ENCODE measurements at regions of chr6 and their contacts with region 1.

Region 1: DNA sequence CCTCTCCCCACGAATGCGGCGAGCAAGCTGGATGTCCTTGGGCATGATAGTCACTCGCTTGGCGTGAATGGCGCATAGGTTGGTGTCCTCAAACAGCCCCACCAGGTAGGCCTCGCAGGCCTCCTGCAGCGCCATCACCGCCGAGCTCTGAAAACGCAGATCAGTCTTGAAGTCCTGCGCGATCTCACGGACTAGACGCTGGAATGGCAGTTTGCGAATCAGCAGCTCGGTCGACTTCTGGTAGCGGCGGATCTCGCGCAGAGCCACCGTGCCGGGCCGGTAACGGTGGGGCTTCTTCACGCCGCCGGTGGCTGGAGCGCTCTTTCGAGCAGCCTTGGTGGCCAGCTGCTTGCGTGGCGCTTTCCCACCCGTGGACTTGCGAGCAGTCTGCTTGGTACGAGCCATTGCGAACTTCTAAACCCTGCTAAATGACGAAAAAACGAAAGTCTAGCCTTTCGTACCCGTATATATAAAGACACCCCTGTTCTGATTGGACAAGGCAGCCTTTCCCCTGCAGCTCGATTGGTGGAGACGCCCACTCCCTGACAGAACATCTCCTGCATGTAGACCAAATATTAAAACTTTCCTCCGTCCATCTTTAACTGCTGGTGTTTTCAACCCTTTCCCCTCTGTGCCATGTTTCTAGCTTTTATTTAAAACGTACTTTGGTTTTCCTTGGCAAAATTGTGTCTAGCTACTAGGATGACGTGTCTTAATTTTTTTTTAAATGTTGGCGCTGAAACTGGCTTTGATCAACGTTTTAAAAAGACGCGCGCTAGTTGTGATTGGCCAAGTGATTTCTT is 109.8 kb downstream of the HFE start:
- DNase-seq: peak; percentile 96
- H3K4me3 ChIP-seq: peak overlapping the region; percentile 91
- H3K27ac ChIP-seq: peak overlapping the region; percentile 93
- H3K4me1 ChIP-seq: peaks cover 39% of the 10 kb centered on the region
- CTCF ChIP-seq: peak; percentile 31; the same call in 1 of the 2 replicates

Region 2: GRCh38 chr6:24919004-24919892 is 1277.8 kb before region 1 on chr6:
- CTCF ChIA-PET with region 1: no interaction called
- POLR2A ChIA-PET with region 1: no interaction called
- intact Hi-C with region 1: no loop called
- DNase-seq: peak; percentile 96
- H3K4me3 ChIP-seq: peak overlapping the region; percentile 61
- H3K27ac ChIP-seq: peak overlapping the region; percentile 88
- H3K4me1 ChIP-seq: peaks cover 66% of the 10 kb centered on the region
- CTCF ChIP-seq: no peak; the same call in 1 of the 2 replicates

Region 3: DNA sequence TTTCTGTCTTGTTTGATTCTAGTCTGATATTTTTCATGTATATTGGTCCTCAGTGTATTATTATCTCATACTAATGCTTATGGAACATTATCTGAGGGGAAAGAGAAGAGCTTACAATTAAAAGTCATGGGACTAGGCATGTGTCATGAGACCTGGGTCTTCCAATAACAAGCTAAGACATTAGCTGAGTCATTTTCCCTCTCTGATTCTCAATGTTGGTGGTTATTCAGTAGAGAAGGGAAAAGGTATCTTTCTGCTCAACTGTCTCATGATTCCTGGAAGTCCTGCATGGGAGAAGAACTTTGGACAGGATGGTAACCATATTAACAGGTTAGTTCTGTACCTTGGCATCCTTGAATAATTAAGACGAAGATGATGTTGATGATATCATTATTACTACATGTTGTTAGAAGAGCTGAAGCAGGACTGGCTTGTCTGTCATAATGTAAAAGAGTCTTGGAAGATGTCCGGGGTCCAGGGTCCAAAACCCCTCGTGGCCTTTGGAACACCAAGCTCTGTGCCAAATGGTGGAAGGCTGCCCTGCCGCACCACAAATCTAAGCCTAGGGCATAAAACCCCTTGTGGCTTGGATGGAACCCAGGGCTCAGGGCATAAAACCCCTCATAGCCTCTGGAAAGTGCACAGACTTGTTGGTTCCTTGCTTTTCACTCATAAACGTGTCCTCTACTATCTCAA is 215.3 kb before region 1 on chr6:
- CTCF ChIA-PET with region 1: no interaction called
- POLR2A ChIA-PET with region 1: no interaction called
- intact Hi-C with region 1: no loop called
- DNase-seq: no peak
- H3K4me3 ChIP-seq: no peak overlapping the region
- H3K27ac ChIP-seq: no peak overlapping the region
- H3K4me1 ChIP-seq: no peaks in the 10 kb centered on the region
- CTCF ChIP-seq: no peak

Region 4: DNA sequence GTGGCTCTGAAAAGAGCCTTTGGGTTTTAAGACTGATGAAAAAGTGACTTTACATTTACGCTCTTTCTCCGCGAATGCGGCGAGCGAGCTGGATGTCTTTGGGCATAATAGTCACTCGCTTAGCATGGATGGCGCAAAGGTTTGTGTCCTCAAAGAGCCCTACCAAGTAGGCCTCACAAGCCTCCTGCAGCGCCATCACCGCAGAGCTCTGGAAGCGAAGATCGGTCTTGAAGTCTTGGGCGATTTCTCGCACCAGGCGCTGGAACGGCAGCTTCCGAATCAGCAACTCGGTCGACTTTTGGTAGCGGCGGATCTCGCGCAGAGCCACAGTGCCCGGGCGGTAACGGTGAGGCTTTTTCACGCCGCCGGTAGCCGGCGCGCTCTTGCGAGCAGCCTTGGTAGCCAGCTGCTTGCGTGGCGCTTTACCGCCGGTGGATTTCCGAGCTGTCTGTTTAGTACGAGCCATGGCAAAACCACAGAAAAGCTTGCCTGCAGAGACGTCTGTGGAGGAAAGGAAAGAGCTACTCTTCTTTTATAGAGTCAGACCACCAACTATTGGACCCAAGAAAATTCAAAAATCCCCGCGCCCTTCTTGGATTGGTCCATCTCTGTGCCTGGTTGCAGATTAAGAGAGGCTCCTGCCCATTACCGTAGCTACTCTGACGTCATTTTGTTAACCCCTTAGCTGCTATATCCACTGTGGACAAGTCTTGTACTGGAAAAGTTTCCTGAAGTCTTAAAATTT is 165.3 kb before region 1 on chr6:
- CTCF ChIA-PET with region 1: no interaction called
- POLR2A ChIA-PET with region 1: interaction called, 246 read pairs
- intact Hi-C with region 1: no loop called
- DNase-seq: peak; percentile 99
- H3K4me3 ChIP-seq: peak overlapping the region; percentile 78
- H3K27ac ChIP-seq: peak overlapping the region; percentile 99
- H3K4me1 ChIP-seq: peaks cover 74% of the 10 kb centered on the region
- CTCF ChIP-seq: 0 out of 2 replicates have a peak, but pooled peaks have one; percentile 33

Region 5: DNA sequence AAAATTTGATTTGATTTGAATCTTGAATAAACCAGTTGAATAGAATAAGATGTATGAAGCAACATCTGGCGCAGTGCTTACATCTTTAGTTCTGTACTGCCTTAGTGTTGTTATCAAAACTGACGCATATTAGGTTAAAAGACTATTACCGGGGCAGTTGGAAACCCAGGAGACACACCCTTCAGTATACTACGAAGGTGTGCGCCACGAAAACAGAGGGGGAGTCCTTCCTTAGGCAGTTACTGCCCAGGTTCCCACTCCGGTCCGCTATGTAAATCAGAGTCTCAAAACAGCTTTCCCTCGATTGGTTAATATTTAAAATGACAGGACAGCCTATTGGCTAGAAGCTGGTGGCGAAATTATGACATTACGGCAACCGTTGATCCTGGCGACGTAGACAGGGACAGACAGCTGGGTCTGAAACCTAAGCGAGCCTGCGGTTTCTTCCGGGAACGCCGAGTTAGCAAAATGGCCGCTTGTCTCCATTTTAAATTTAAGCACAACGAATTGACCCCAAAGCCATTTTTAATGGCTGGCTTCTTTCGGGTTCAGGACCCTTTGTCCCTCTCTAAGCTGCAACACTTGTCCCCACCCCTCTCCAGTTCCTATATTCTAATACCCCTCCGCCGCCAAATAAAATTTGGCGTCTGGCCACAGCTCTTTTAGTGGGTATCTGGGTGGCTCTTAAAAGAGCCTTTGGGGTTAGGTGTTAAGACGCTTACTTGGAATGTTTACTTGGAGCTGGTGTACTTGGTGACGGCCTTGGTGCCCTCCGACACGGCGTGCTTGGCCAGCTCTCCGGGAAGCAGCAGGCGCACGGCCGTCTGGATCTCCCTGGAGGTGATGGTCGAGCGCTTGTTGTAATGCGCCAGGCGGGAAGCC is 74.0 kb before region 1 on chr6:
- CTCF ChIA-PET with region 1: no interaction called
- POLR2A ChIA-PET with region 1: interaction called, 76 read pairs
- intact Hi-C with region 1: loop called (anchors 2 kb)
- DNase-seq: peak; percentile 99
- H3K4me3 ChIP-seq: peak overlapping the region; percentile 72
- H3K27ac ChIP-seq: peak overlapping the region; percentile 99
- H3K4me1 ChIP-seq: peaks cover 60% of the 10 kb centered on the region
- CTCF ChIP-seq: no peak

Region 6: DNA sequence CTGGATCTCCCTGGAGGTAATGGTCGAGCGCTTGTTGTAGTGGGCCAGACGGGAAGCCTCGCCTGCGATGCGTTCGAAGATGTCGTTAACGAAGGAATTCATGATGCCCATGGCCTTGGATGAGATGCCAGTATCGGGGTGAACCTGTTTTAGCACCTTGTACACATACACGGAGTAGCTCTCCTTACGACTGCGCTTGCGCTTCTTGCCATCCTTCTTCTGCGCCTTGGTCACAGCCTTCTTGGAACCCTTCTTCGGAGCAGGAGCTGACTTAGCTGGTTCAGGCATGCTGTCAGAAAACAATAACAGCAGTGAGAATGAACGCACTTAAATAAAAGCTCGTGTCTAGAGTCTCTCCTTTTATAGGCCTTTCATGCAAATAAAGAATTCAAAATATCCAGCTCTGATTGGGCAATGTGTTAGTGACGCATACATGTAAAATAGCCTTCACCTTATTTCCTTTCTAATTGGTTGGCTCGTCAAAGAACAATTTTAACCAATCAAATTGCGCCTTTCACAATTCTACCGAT is 19.4 kb after region 1 on chr6:
- CTCF ChIA-PET with region 1: no interaction called
- POLR2A ChIA-PET with region 1: interaction called, 505 read pairs
- intact Hi-C with region 1: loop called (anchors 2 kb)
- DNase-seq: peak; percentile 98
- H3K4me3 ChIP-seq: peak overlapping the region; percentile 79
- H3K27ac ChIP-seq: peak overlapping the region; percentile 99
- H3K4me1 ChIP-seq: peaks cover 63% of the 10 kb centered on the region
- CTCF ChIP-seq: no peak

Region 7: DNA sequence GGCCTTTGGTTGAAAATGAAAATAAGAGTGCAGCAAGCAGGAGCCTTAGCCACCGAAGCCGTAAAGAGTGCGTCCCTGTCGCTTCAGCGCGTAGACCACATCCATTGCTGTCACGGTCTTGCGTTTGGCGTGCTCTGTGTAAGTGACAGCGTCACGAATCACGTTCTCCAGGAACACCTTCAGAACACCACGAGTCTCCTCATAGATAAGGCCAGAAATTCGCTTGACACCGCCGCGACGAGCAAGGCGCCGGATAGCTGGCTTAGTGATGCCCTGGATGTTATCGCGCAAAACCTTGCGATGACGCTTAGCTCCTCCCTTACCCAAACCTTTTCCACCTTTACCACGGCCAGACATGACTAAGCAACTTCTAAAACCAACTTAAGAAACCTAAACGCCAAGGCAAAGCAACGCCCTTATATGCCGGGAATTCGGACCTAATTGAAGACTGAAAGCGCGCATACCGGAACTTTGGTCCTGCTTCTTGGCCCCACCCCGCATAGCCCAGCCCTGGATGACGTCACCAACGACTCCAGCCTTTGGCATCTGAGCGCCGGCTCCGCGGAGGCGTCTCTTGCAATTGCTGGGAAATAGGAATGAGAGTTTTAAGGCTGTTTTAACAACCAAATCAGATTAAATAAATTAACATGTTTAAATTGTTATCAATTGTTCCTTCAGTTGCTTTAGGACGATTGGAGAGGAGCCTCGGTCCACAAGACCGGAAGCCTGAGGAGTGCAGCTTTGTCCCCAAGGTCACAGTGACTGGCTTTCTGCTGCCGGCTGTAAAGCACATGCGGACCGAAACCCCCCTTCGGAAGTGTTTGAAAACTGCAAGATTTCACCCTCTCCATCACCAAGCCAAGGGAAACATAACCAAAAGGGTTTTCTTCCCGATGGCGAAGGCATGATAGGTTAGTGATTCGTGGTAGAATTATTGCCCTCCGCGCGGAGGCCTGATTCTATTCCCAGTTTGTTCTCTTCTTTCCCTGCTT is 88.4 kb after region 1 on chr6:
- CTCF ChIA-PET with region 1: no interaction called
- POLR2A ChIA-PET with region 1: interaction called, 23 read pairs
- intact Hi-C with region 1: no loop called
- DNase-seq: peak; percentile 99
- H3K4me3 ChIP-seq: peak overlapping the region; percentile 80
- H3K27ac ChIP-seq: peak overlapping the region; percentile 96
- H3K4me1 ChIP-seq: peaks cover 32% of the 10 kb centered on the region
- CTCF ChIP-seq: 0 out of 2 replicates have a peak, but pooled peaks have one; percentile 0

Region 8: DNA sequence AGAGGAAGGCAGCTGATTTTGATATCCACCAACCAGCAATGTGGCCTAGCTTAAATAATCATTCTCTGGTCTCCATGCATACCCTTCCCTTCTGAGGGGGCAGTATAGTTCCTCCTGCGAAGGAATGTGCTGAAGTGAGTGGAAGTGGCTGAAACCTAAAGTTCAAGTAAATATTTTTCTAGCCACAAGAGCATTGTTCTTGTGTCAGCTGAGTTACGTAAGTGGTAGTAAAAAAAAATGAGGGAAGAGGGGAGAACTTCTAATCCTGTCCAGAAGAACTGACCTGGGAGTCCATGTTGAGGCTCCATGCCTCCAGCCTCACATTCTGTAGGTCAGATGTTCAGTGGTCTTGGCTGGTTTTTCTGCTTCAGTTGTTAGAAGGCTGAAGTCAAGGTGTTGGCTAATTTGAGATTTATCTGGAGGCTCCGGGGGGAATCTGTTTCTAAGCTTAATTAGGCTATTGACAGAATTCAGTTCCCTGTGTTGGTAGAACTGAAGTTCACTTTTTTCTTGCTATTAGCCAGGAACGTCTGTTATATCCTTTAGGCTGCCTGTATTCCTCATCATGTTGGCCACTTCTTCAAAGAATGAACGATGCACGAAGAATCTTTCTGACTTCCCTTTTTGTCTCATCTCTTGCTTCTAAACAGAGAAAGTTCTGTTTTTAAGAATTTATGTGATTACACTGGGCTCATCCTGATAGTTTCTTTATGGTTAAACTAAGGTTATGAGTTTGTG is 843.4 kb after region 1 on chr6:
- CTCF ChIA-PET with region 1: no interaction called
- POLR2A ChIA-PET with region 1: no interaction called
- intact Hi-C with region 1: no loop called
- DNase-seq: no peak
- H3K4me3 ChIP-seq: no peak overlapping the region
- H3K27ac ChIP-seq: no peak overlapping the region
- H3K4me1 ChIP-seq: no peaks in the 10 kb centered on the region
- CTCF ChIP-seq: no peak

Region 9: GRCh38 chr6:27864906-27865849 is 1668.1 kb after region 1 on chr6:
- CTCF ChIA-PET with region 1: no interaction called
- POLR2A ChIA-PET with region 1: interaction called, 84 read pairs
- intact Hi-C with region 1: loop called (anchors 2 kb)
- DNase-seq: peak; percentile 99
- H3K4me3 ChIP-seq: peak overlapping the region; percentile 67
- H3K27ac ChIP-seq: peak overlapping the region; percentile 99
- H3K4me1 ChIP-seq: peaks cover 60% of the 10 kb centered on the region
- CTCF ChIP-seq: no peak

Measured in OCI-LY7 (cell line).